ENCODE measurements at regions of chr6 and their contacts with region 1.

Region 1: GRCh38 chr6:75284632-75285286 is at the start of gene TMEM30A:
- DNase-seq: peak; percentile 97 to 98
- H3K4me3 ChIP-seq: peak within 1 kb of the TSS; percentile 95
- H3K27ac ChIP-seq: peak within 1 kb of the TSS; percentile 85
- H3K4me1 ChIP-seq: peaks cover 54% of the 10 kb centered on the region
- H3K27me3 ChIP-seq: no peaks in the 10 kb centered on the region
- CTCF ChIP-seq: 0 out of 2 replicates have a peak, but pooled peaks have one; percentile 3
- total RNA-seq, gene TMEM30A: 78.2 and 122 TPM in 2 replicates

Region 2: DNA sequence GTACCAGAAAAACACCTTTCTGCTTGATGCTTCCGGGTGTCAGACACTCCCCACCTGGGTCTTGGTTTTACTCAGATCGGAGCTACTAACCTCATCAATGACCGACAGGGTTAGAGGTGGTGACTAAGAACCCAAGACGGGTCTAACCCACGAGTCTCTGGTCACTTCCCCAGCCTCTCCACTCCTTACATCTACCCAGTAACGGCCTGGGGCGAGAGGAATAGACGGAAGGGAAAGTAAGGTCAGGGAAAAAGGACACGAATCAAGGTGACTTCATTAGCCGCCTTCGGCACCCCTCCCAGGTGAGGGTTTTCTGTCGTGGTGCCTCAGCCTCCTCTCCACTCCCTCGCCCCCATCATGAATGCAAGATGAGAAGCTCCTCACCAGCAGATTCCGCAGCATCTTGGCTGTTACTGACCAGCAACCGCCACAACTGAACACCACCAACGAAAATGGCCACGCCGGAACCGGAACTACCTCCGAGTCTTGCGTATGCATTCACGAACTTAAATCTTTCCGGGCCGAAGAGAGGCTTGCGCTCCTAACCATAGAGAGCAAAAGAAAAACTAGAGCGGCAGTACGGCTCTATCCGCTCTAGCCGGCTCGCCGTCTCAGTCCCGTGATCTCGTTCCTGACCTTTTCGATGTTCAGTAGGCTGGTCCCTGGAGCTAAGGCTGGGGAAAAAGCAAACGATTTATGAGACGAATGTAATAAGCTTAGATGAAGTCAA is 41.3 kb before region 1 on chr6 and contains the start of gene COX7A2:
- CTCF ChIA-PET with region 1: no interaction called
- POLR2A ChIA-PET with region 1: no interaction called
- intact Hi-C with region 1: loop called (anchors 1 kb)
- DNase-seq: peak; percentile 84 to 93
- H3K4me3 ChIP-seq: peak within 1 kb of the TSS; percentile 84
- H3K27ac ChIP-seq: peak within 1 kb of the TSS; percentile 82
- H3K4me1 ChIP-seq: peaks cover 24% of the 10 kb centered on the region
- H3K27me3 ChIP-seq: no peaks in the 10 kb centered on the region
- CTCF ChIP-seq: no peak
- total RNA-seq, gene COX7A2: 484 and 524 TPM in 2 replicates

Region 3: DNA sequence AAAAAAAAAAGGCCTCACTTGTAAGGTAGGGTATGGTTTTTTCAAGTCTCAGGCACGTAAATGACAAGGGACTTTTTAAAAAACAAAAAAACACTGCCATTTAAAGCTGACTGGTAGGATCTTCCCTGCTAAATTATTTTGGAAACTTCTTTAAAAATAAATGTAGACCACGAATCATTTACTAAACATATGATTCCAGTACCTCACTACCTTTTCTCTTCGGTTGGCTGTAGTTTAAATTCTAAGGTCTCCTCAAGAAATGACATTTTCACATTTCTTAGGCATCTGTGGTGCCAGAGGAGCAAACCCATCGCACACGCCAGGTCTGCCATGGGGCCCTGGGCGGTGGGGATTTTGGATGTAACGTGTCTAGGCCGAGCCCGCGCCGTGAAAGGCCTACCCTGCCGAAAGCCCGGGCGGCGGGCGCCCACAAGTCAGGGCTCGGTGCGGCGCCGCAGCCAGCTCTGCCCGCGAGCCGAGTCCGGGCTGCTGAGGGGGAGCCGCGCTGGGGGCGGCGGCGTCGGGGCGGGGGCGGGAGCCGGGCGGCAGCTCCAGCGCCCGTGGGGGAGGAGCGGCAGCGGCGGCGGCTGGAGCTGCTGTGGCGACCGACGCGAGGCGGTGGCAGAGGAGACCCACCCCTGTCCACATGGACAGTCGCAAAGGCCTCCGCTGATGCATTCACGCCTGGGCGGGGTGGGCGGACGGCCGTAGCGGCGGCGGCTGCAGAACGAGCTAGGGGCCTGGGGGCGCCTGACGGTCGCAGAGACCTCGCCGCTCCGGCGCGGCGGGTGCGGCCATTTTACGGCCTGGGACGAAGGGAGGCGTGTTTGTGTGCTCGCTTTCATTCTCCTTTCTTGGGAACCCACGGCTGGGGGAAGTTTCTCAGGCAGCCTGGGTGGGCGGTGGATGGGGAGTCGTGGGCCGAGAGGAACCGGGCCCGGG is 316.8 kb after region 1 on chr6 and contains the start of gene SENP6:
- CTCF ChIA-PET with region 1: no interaction called
- POLR2A ChIA-PET with region 1: interaction called, 6 read pairs
- intact Hi-C with region 1: loop called (anchors 10 kb)
- DNase-seq: peak; percentile 54 to 83
- H3K4me3 ChIP-seq: peak within 1 kb of the TSS; percentile 93
- H3K27ac ChIP-seq: peak within 1 kb of the TSS; percentile 86
- H3K4me1 ChIP-seq: peaks cover 27% of the 10 kb centered on the region
- H3K27me3 ChIP-seq: no peaks in the 10 kb centered on the region
- CTCF ChIP-seq: no peak
- total RNA-seq, gene SENP6: 68.0 and 70.4 TPM in 2 replicates